ENCODE measurements at regions of chrX and their contacts with region 1.

Region 1: DNA sequence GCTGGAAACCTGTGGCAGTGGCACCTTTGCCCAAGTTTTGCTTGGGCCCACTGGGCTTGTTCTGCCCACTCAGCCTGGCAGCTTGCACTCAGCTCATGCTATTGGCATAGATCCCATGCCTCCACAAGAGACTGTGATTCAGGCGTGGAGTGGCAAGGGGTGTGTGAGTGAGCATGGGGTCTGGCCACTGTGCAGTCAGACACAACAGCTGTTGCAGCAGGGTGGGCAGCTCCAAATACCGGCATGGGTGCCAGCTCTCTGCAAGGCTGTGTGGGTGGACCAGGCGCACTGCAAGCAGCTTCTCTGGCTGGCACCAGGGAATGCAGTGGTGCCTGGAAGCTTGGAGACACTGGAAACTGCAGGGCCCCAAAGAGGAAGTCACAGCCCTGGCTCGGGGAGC is 27.4 kb upstream of the DIPK2B start:
- DNase-seq: no peak
- H3K4me3 ChIP-seq: no peak overlapping the region
- H3K27ac ChIP-seq: no peak overlapping the region
- H3K4me1 ChIP-seq: no peaks in the 10 kb centered on the region
- H3K27me3 ChIP-seq: peaks cover 0 to 60% of the 10 kb centered on the region in 2 donors
- CTCF ChIP-seq: no peak
- POLR2A ChIP-seq: no peak

Region 2: GRCh38 chrX:44953734-44954502 is 274.2 kb before region 1 on chrX:
- intact Hi-C with region 1: loop called (anchors 10 kb)
- DNase-seq: no peak
- H3K4me3 ChIP-seq: no peak overlapping the region
- H3K27ac ChIP-seq: no peak overlapping the region
- H3K4me1 ChIP-seq: no peaks in the 10 kb centered on the region
- H3K27me3 ChIP-seq: no peaks in the 10 kb centered on the region
- CTCF ChIP-seq: no peak
- POLR2A ChIP-seq: no peak

Region 3: GRCh38 chrX:45722471-45722870 is 494.3 kb after region 1 on chrX:
- intact Hi-C with region 1: no loop called
- DNase-seq: no peak
- H3K4me3 ChIP-seq: no peak overlapping the region
- H3K27ac ChIP-seq: no peak overlapping the region
- H3K4me1 ChIP-seq: no peaks in the 10 kb centered on the region
- H3K27me3 ChIP-seq: peaks cover 0 to 18% of the 10 kb centered on the region in 2 donors
- CTCF ChIP-seq: no peak
- POLR2A ChIP-seq: no peak

Measured in breast epithelium (tissue), 4 donors.